PC-3 (cell line): ENCODE measurements at regions of chr7 and their contacts with region 1.

Region 1: DNA sequence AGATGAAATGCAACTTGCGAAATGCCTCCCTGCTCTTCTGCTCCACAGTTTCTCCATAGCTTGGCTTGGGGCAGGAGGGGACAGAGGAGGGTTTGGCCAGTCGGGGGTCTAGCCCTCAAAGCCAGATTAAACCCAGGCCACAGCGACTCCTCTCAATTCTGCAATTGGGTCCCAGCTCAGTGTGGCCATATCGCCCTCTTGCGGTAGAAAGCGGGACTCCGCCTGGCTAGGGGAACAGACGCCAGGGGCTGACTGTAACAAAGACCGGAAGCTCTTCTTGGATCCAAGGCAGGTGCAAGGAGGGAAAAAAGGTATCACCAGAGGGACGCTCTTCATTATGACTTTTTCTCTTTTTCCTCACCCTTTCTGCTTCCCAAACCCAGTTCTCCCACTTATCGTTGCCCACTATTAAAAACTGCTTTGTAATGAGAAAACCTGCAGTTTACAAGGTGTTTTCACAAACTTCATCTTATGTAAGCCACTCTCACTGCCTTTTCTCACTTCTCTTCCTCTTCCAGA is 36.6 kb upstream of the TNPO3 start:
- DNase-seq: peak; percentile 87
- ATAC-seq: peak; percentile 96
- H3K4me3 ChIP-seq: no peak overlapping the region
- H3K27ac ChIP-seq: no peak overlapping the region
- H3K4me1 ChIP-seq: 0 out of 2 replicates have a peak, but pooled peaks cover 3% of the 10 kb centered on the region
- H3K27me3 ChIP-seq: no peaks in the 10 kb centered on the region
- CTCF ChIP-seq: peak; percentile 97

Region 2: DNA sequence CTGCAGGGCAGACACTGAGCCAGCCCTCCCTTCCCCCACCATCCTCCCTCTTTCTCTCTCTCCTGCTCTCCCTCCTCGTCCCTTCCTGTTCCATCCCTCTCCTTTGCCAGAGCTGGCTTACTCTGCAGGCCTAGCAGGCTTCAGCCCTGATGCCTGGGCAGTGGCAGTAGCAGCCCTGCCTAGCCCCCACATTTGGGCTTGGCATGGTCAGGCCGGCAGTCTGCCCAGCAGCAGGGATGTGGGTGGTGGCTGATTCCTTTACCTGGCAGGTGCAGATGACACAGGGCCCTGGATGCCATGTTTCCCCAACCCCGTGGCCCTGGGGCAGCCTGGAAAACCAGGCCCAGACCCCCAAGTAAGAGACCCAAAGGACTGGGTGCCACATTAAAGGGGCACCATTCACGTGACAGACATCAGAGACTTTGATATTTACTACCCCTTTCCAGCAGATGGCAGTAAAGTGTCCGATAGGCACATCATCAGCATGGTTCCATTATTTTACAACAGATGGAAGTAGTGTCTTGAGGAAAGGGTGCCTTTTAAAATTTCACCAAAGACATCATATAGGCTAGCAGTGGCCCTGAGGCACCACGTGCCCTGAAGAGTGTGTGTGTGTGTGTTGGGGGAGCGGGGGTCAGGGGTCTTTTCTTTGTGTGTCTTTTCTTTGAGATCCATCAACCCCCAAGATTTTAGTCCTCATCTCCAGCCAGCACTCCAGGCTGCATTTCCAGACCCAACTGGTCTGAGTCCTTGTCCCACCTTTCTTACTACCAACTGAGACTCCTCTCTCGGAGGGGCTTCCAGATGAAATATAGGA is 187.0 kb before region 1 on chr7:
- CTCF ChIA-PET with region 1: interaction called, 3 read pairs
- POLR2A ChIA-PET with region 1: no interaction called
- intact Hi-C with region 1: loop called (anchors 1 kb)
- DNase-seq: peak; percentile 68
- ATAC-seq: peak; percentile 59
- H3K4me3 ChIP-seq: no peak overlapping the region
- H3K27ac ChIP-seq: no peak overlapping the region
- H3K4me1 ChIP-seq: peaks cover 11% of the 10 kb centered on the region; the same call in 1 of the 2 replicates
- H3K27me3 ChIP-seq: no peaks in the 10 kb centered on the region
- CTCF ChIP-seq: peak; percentile 81

Region 3: DNA sequence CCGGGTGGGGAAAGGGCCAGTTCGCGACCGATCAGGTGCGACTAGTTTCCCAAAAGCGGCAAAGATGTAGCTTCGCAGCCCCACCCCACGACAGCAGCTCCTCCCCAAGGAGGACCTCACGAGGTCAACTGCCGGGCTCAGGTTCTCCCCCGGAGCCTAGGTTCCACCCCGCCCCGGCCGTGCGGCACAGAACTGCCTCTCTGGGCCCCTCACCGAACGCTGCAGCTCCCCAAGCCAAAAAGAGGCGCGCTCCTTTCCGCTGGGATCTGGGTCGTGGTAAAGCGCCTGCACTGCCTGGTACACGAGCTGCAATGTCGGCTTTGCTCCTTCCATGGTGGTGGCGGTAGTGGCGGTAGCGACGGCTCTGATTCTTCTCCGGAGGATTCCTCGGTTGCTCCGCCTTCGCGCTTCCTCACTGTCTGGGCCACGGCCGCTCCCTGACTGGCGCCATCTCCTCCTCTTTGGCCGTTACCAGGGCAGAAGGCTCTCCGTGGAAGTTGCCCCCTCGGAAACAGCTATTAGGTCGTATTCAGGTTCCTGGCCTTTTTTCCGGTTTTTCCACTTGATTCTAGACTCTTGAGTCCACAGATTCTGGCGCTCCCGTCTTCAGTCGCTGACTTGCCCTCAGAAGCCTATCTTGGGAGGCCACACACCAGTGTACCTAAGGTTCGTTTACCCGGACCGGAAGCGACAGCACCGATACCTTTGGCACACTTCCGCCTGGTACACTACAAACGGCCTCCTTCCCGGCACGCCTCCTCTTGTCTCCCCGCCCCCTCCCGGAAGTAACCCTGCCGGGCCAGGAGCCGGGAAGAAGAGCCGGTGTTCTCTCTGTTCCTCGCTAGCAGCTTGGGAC is 36.9 kb before region 1 on chr7 and contains the start of gene TNPO3:
- CTCF ChIA-PET with region 1: interaction called, 11 read pairs
- POLR2A ChIA-PET with region 1: interaction called, 3 read pairs
- intact Hi-C with region 1: loop called (anchors 2 kb)
- DNase-seq: peak; percentile 90
- ATAC-seq: peak; percentile 83
- H3K4me3 ChIP-seq: peak within 1 kb of the TSS; percentile 93
- H3K27ac ChIP-seq: peak within 1 kb of the TSS; percentile 89
- H3K4me1 ChIP-seq: peaks cover 7% of the 10 kb centered on the region
- H3K27me3 ChIP-seq: no peaks in the 10 kb centered on the region
- CTCF ChIP-seq: no peak
- total RNA-seq, gene TNPO3: 55.9 and 57.3 TPM in 2 replicates

Region 4: GRCh38 chr7:129066290-129067131 is 25.0 kb before region 1 on chr7:
- CTCF ChIA-PET with region 1: interaction called, 4 read pairs
- POLR2A ChIA-PET with region 1: no interaction called
- intact Hi-C with region 1: loop called (anchors 1 kb)
- DNase-seq: peak; percentile 70
- ATAC-seq: peak; percentile 82
- H3K4me3 ChIP-seq: no peak overlapping the region
- H3K27ac ChIP-seq: peak overlapping the region; percentile 31
- H3K4me1 ChIP-seq: peaks cover 11% of the 10 kb centered on the region
- H3K27me3 ChIP-seq: no peaks in the 10 kb centered on the region; the same call in 1 of the 2 replicates
- CTCF ChIP-seq: no peak